ENCODE measurements at regions of chr10 and their contacts with region 1.

Region 1: DNA sequence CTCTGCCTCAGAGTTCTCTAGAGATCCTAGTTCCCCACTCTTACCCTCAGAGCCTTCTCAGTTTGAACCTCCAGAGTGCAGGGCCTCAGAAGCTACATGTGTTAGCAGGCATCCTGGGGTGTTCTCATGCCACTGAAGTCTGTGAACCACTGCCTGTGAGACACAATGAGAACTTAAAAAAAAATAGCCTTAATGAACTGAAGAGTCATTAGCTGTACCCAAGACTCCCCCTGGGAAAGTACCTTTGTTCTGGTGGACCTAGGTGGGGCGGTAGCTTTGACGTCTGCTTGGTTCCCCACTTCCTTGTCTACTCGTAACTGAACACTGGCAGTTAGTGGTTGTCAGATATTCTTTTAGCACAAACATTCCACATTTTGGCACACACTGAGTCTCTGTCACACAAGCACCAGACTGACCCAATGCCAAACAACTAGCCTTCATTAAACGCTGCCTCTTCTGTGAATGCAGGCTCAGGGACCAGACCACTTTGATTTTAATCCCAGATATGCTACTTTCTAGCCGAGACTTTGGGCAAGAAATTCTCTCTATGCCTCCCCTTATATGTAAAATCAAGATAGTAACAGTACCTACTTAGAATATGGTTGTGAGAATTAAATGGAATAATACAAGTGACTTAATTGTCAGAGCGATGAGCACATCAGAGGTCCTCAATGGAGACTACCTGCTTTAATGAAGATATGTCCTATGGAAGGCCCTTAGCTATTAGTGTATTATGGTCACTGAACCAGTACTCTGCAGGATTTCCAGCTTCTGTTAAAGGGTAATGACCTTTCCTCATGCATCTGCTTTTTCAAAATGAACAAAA is 75.3 kb upstream of the CC2D2B start:
- DNase-seq: peak; percentile 71
- H3K4me3 Mint-ChIP-seq: peak overlapping the region; percentile 87
- H3K27ac Mint-ChIP-seq: peak overlapping the region; percentile 98
- H3K4me1 Mint-ChIP-seq: peaks cover 64% of the 10 kb centered on the region
- H3K27me3 Mint-ChIP-seq: no peaks in the 10 kb centered on the region

Region 2: GRCh38 chr10:95818668-95819067 is 13.8 kb before region 1 on chr10:
- intact Hi-C with region 1: loop called (anchors 1 kb)
- DNase-seq: no peak
- H3K4me3 Mint-ChIP-seq: no peak overlapping the region
- H3K27ac Mint-ChIP-seq: peak overlapping the region; percentile 2
- H3K4me1 Mint-ChIP-seq: peaks cover 41% of the 10 kb centered on the region
- H3K27me3 Mint-ChIP-seq: peaks cover 4% of the 10 kb centered on the region

Region 3: DNA sequence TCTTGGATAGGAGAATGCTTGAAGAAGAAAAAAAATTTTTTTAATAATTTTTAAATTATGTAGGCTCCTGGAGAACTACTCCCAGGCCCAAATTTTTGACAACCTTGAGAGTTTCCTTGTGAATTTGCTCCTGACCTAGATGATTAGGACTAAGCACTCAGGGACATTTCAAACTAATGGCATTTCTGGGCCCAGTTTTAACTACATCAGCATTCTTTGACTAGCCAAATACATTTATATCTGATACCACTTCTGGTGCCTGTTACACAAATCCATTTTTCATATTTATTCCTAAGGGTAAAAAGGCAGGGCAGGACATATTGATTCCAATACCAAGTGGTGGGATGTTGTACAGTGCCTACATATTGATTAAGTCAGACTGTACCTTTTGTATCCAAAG is 14.6 kb after region 1 on chr10:
- intact Hi-C with region 1: no loop called
- DNase-seq: no peak
- H3K4me3 Mint-ChIP-seq: no peak overlapping the region
- H3K27ac Mint-ChIP-seq: no peak overlapping the region
- H3K4me1 Mint-ChIP-seq: peaks cover 15% of the 10 kb centered on the region
- H3K27me3 Mint-ChIP-seq: peaks cover 2% of the 10 kb centered on the region

Measured in activated T-helper 2 cell treated with anti-CD3 and anti-CD28 coated beads, Interferon-gamma antibody, Interleukin-2, Interleukin-4, amounts not matched to agents 10 μg/mL and 5 μg/mL and 100 μg/mL, durations not matched to agents 14 hours and 24 hours and 36 hours (primary cell).